Dendritic cell treated with granulocyte-macrophage colony-stimulating factor and Interleukin-4, amounts not matched to agents 40 ng/mL and 50 ng/mL, for 4 days (primary cell): ENCODE measurements at regions of chr19 and their contacts with region 1.

Region 1: DNA sequence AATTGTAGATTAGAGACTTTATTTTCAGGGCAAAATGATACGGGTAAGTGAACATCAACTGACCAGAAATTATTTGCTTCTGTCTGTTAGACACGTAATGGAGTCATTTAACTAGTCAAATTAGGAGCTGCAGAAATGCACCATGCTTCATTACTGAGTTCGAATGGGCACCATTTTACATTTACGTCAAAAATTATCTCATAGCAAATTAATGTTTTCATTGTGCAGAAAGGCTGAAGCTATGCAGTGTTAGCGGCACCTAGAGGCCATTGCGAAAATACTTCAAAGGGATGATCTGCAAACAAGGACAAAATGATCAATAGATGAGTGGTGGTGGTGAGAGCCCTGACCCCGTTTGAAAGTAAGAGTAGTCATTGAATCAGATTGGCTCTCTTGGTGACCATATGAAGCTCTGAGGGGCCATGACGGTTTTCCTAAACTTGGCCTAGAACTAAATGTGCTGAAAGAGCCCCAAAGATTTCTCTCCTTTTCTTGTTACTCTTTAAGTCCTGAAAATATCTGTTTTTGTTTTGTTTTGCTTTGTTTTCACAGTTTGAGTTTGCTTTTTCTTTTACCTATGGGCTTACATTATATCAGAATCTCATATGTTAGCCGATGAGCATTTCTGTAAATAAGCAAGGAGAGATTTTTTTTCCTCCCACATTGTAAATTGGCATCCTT is 277.9 kb downstream of the ZNF536 start:
- H3K4me3 Mint-ChIP-seq: no peak overlapping the region
- H3K27ac Mint-ChIP-seq: no peak overlapping the region
- H3K4me1 Mint-ChIP-seq: no peaks in the 10 kb centered on the region
- H3K27me3 Mint-ChIP-seq: peaks cover 11% of the 10 kb centered on the region

Region 2: GRCh38 chr19:29735800-29736199 is 914.3 kb before region 1 on chr19:
- intact Hi-C with region 1: loop called (anchors 5 kb)
- H3K4me3 Mint-ChIP-seq: no peak overlapping the region
- H3K27ac Mint-ChIP-seq: no peak overlapping the region
- H3K4me1 Mint-ChIP-seq: no peaks in the 10 kb centered on the region
- H3K27me3 Mint-ChIP-seq: peaks cover 2% of the 10 kb centered on the region